AG04449 (cell line): ENCODE measurements at regions of chr7 and their contacts with region 1.

Region 1: GRCh38 chr7:12686894-12687717 is at the start of gene ARL4A:
- DNase-seq: peak; percentile 72
- H3K4me3 ChIP-seq: peak within 1 kb of the TSS; percentile 81
- CTCF ChIP-seq: peak; percentile 22

Region 2: GRCh38 chr7:12269100-12269895 is 417.8 kb before region 1 on chr7:
- CTCF ChIA-PET with region 1: no interaction called
- POLR2A ChIA-PET with region 1: no interaction called
- DNase-seq: no peak
- H3K4me3 ChIP-seq: no peak overlapping the region
- CTCF ChIP-seq: no peak

Region 3: DNA sequence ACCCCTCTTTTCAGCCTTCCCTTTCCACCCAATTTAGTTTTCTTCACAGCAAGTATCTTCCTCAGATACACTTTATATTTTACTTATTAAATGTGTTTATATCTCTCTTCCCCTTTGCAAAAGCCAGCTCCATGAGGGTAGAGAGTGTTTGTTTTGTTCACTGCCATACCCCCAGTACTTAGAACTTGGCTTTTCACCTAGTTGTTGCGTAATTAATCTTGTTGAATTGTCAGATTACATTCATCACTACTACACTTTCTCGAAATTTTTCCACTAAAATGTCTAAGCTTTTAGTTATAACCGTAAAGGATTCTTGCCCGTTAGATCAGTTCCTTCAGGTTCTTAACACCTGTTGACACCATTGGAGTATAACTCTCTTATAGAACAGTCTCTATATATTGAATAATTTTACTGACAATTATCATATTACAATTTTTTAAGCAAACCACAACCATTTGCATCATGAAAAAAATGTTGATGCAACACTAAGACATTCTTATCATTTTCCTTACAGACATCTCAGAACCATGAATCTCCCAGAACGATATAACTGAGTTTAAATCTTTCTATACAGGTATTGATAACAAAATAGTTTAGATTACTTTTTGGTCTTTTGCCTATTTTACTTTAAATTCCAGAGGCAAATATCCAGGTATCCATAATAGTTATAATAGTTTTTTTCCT is 313.4 kb before region 1 on chr7:
- CTCF ChIA-PET with region 1: no interaction called
- POLR2A ChIA-PET with region 1: no interaction called
- DNase-seq: no peak
- H3K4me3 ChIP-seq: no peak overlapping the region
- CTCF ChIP-seq: no peak

Region 4: GRCh38 chr7:12674849-12675248 is 12.3 kb before region 1 on chr7:
- CTCF ChIA-PET with region 1: interaction called, 13 read pairs
- POLR2A ChIA-PET with region 1: no interaction called
- DNase-seq: no peak
- H3K4me3 ChIP-seq: no peak overlapping the region
- CTCF ChIP-seq: no peak

Region 5: GRCh38 chr7:12703881-12704280 is 16.8 kb after region 1 on chr7:
- CTCF ChIA-PET with region 1: interaction called, 17 read pairs
- POLR2A ChIA-PET with region 1: no interaction called
- DNase-seq: no peak
- H3K4me3 ChIP-seq: no peak overlapping the region
- CTCF ChIP-seq: no peak

Region 6: GRCh38 chr7:13262929-13263530 is 575.9 kb after region 1 on chr7:
- CTCF ChIA-PET with region 1: interaction called, 48 read pairs
- POLR2A ChIA-PET with region 1: no interaction called
- DNase-seq: no peak
- H3K4me3 ChIP-seq: no peak overlapping the region
- CTCF ChIP-seq: peak; percentile 8